ENCODE measurements at regions of chr4 and their contacts with region 1.

Region 1: GRCh38 chr4:139295206-139295941 is 5.9 kb upstream of the NAA15 start:
- DNase-seq: peak; percentile 95 to 98 (median 98)
- H3K4me3 ChIP-seq: peak overlapping the region; percentile 55 to 99 (median 88)
- H3K27ac ChIP-seq: peak overlapping the region; percentile 64 to 97 (median 87)
- H3K27me3 ChIP-seq: no peaks in the 10 kb centered on the region
- CTCF ChIP-seq: peak; percentile 92 to 100 (median 99)

Region 2: DNA sequence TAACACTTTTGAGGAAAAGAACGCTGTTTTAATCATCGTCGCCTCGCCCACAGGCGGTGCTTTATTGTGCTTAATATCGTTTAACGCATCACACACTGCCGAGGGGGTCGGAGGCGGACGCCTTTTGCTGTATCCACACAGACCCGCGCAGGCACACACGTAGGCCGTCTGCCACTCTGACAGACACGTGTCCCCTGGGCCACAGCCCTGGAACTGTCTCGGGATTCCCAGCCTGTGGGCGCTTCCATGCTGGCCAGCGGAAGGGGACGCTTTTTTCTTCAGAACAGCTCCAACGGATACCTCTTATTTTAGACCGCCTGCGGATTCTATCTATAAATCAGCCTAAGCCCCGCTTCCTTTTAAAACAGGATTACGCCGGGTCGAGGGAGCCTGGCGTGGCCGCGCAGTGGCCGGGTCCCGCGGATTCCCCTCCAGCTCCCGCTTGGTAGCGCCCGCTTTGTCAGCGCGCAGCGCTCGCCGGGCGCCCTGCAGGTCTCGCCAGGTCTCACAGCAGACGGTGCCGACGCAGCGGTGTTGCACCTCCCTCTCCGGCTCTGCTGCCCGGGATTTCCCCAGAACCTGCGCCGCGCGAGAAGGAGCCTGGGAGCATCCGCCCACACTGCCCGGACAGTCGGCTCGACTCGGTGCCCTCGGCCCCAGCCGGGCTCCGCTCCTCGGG is 280.0 kb before region 1 on chr4 and contains the start of gene NOCT:
- intact Hi-C with region 1: loop called in 1 of 2 experiments (anchors 5 kb)
- DNase-seq: peak; percentile 73 to 89 (median 87)
- H3K4me3 ChIP-seq: peak within 1 kb of the TSS; percentile 50 to 93 (median 78)
- H3K27ac ChIP-seq: peak within 1 kb of the TSS in 58 of 59 donors; percentile 61 to 97 (median 88)
- H3K27me3 ChIP-seq: no peaks in the 10 kb centered on the region
- CTCF ChIP-seq: peak in 24 of 56 donors; percentile 2 to 53 (median 26)
- total RNA-seq, gene NOCT: 6.5 to 26.5 (median 12.5) TPM

Region 3: GRCh38 chr4:139030614-139031235 is 264.6 kb before region 1 on chr4:
- intact Hi-C with region 1: loop called (anchors 2 to 5 kb)
- DNase-seq: peak; percentile 43 to 87 (median 68)
- H3K4me3 ChIP-seq: peak overlapping the region in 9 of 59 donors; percentile 8 to 31 (median 19)
- H3K27ac ChIP-seq: peak overlapping the region in 11 of 59 donors; percentile 16 to 94 (median 79)
- H3K27me3 ChIP-seq: no peaks in the 10 kb centered on the region
- CTCF ChIP-seq: peak; percentile 75 to 96 (median 85)

Region 4: DNA sequence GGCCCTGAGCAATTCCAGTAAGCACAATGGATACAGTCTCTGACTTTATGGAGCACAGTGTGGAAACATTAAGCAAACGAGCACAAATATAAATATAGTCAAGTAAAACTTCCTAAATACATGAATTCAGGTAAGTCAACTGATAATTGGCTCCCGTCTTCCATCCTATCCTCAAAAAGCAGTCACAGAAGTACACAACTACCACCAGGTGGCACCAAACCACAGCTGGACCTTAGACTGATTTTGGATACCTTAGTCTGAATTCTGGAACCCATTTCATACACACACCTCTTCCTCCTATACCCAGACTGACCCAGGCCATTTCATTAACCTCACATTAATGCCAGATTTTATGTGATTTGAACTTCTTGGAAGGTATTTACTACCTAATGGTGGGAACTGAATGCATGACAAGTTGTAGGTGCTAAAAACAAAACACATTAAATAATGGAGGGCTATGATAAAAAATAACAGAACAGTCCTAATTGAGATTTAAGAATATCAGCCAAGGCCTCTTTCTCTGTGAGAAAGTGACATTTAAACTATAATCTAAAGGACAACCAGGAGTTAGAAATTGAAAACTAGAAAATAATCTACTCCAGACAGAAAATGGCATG is 195.9 kb before region 1 on chr4:
- intact Hi-C with region 1: loop called (anchors 5 kb)
- DNase-seq: peak in 9 of 10 donors; percentile 30 to 72 (median 63)
- H3K4me3 ChIP-seq: no peak overlapping the region
- H3K27ac ChIP-seq: peak overlapping the region in 8 of 59 donors; percentile 1 to 39 (median 12)
- H3K27me3 ChIP-seq: no peaks in the 10 kb centered on the region
- CTCF ChIP-seq: peak; percentile 67 to 94 (median 89)

Region 5: GRCh38 chr4:139229534-139230039 is 65.8 kb before region 1 on chr4:
- intact Hi-C with region 1: loop called (anchors 2 to 10 kb)
- DNase-seq: no peak
- H3K4me3 ChIP-seq: peak overlapping the region in 3 of 59 donors; percentile 15 to 24 (median 17)
- H3K27ac ChIP-seq: no peak overlapping the region
- H3K27me3 ChIP-seq: no peaks in the 10 kb centered on the region
- CTCF ChIP-seq: peak; percentile 62 to 92 (median 75)

Measured in dorsolateral prefrontal cortex (tissue), 120 donors.